HCT116 (cell line): ENCODE measurements at regions of chr10 and their contacts with region 1.

Region 1: DNA sequence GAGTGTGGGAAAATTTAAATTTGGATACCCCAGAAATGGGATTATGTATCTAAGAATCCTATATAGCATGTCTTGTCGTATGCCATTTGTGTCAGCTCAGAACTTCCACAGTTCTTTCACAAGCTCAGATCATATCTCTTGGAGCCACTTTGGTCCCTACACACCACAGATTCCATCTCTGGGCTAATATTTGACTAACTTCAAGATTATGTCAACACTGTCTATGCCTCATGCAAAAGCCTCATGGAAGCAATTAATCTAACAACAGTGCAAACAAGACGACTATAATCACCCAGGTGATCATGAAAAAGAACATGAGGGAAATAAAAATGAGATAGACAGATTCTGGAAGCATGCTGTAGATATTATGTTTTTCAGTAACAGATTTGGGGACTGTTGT is 189.1 kb downstream of the LRRTM3 start:
- DNase-seq: no peak
- ATAC-seq: no peak
- H3K4me3 ChIP-seq: no peak overlapping the region
- H3K27ac ChIP-seq: no peak overlapping the region
- H3K4me1 ChIP-seq: peaks cover 10 to 16% of the 10 kb centered on the region in 2 experiments
- H3K27me3 ChIP-seq: no peaks in the 10 kb centered on the region
- CTCF ChIP-seq: no peak
- POLR2A ChIP-seq: no peak
- RAD21 ChIP-seq: no peak

Region 2: DNA sequence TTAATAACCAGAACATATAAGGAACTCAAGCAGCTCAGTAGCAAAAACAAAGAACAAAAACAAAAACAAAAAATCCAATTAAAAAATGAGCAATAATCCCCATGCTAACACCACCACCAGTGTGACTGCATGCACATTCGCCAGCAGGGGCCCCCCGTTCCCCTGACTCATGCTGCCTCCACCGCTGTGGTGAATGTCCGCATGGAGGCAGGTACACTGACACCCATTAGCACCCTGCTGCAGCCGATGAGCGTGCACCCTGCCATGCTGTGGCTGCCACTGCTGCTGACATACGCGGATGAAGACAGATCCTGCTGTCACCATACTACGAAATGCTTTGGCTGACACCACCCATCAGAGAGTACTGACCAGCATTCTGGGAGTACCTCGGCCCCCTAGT is 510.7 kb before region 1 on chr10:
- CTCF ChIA-PET with region 1: no interaction called
- POLR2A ChIA-PET with region 1: no interaction called
- RAD21 ChIA-PET with region 1: no interaction called
- intact Hi-C with region 1: no loop called
- DNase-seq: no peak
- ATAC-seq: no peak
- H3K4me3 ChIP-seq: no peak overlapping the region
- H3K27ac ChIP-seq: no peak overlapping the region
- H3K4me1 ChIP-seq: no peaks in the 10 kb centered on the region
- H3K27me3 ChIP-seq: no peaks in the 10 kb centered on the region
- CTCF ChIP-seq: no peak
- POLR2A ChIP-seq: no peak
- RAD21 ChIP-seq: no peak

Region 3: DNA sequence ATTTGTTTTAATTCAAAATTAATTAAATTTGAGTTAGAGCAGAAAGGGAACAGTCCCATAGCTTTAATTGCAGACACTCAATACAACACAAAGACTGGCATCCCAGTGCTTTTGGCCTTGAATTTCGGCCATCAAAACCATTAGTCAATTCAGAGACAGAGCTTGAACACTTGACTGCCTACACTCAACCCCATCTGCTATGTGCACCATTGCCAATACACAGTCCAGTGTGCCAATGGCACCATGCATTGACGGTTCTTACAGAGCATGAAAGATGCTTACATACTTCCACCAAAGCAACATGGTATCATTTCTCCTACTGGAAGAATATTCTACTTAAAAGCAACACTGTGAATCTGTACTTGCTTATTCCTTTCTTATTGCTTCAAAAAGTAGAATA is 232.7 kb before region 1 on chr10:
- CTCF ChIA-PET with region 1: no interaction called
- POLR2A ChIA-PET with region 1: no interaction called
- RAD21 ChIA-PET with region 1: no interaction called
- intact Hi-C with region 1: no loop called
- DNase-seq: no peak
- ATAC-seq: no peak
- H3K4me3 ChIP-seq: no peak overlapping the region
- H3K27ac ChIP-seq: no peak overlapping the region
- H3K4me1 ChIP-seq: no peaks in the 10 kb centered on the region
- H3K27me3 ChIP-seq: no peaks in the 10 kb centered on the region
- CTCF ChIP-seq: no peak
- POLR2A ChIP-seq: no peak
- RAD21 ChIP-seq: no peak

Region 4: GRCh38 chr10:67098461-67098860 is 16.5 kb before region 1 on chr10:
- CTCF ChIA-PET with region 1: no interaction called
- POLR2A ChIA-PET with region 1: no interaction called
- RAD21 ChIA-PET with region 1: no interaction called
- intact Hi-C with region 1: loop called (anchors 1 kb)
- DNase-seq: no peak
- ATAC-seq: no peak
- H3K4me3 ChIP-seq: no peak overlapping the region
- H3K27ac ChIP-seq: no peak overlapping the region
- H3K4me1 ChIP-seq: no peaks in the 10 kb centered on the region
- H3K27me3 ChIP-seq: no peaks in the 10 kb centered on the region
- CTCF ChIP-seq: no peak
- POLR2A ChIP-seq: no peak
- RAD21 ChIP-seq: no peak

Region 5: DNA sequence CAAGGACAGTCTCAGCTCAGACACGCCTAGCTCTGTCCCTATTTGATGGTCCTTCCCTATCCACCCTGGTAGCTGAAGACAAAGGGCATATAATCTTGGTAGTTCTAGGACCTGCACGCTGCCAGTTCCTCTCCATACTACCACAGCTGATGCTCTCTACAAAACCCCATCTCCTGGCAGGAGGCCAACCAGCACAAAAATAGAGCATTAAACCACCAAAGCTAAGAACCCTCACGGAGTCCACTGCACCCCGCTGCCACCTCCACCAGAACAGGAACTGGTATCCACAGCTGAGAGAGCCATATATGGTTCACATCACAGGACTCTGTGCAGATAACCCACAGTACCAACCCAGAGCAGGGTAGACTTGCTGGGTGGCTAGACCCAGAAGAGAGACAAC is 110.3 kb after region 1 on chr10:
- CTCF ChIA-PET with region 1: no interaction called
- POLR2A ChIA-PET with region 1: no interaction called
- RAD21 ChIA-PET with region 1: no interaction called
- intact Hi-C with region 1: no loop called
- DNase-seq: no peak
- ATAC-seq: no peak
- H3K4me3 ChIP-seq: no peak overlapping the region
- H3K27ac ChIP-seq: no peak overlapping the region
- H3K4me1 ChIP-seq: no peaks in the 10 kb centered on the region
- H3K27me3 ChIP-seq: no peaks in the 10 kb centered on the region
- CTCF ChIP-seq: no peak
- POLR2A ChIP-seq: no peak
- RAD21 ChIP-seq: no peak